Dendritic cell treated with granulocyte-macrophage colony-stimulating factor and Interleukin-4, amounts not matched to agents 40 ng/mL and 50 ng/mL, for 4 days (primary cell): ENCODE measurements at regions of chr3 and their contacts with region 1.

Region 1: DNA sequence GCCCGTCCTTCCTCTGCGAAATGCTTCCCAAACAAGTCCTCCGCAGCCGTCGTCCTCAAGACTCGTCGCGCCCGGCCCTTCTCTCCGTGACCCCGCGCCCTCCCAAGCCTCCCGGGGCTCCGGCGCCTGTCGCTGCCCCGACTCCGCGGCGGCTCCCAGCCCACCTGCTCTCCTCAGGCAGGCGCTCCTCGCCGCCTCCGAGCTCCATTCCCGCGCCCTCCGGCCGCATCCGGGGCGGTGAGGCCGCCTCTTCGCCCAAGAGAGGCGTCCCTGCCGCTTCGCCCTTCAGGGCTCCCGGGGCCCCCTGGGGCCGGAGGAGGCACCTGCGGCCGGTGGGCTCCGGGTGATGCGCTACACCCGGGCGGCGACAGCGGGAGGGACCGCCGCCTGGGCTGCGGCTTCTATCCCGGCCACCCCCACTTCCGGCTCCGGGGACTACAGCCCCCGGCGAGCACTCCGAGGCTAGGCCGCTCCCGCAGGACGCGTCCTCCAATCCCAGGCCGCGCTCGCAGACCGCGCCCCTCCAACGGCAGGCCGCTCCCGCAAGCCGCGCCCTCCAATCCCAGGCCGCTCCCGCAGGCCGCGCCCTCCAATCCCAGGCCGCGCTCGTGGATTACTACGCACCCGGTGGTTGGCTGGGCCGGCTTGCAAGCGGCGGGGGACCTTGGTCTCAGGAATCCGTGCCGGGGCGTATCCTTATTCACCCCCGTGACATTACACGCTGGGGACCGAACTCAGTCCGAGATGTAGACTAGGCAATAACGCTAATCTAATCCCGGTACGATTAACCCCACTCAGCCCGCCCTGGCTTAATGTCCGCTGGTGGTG is at the start of gene RUBCN:
- H3K4me3 Mint-ChIP-seq: peak within 1 kb of the TSS; percentile 82
- H3K27ac Mint-ChIP-seq: peak within 1 kb of the TSS; percentile 75
- H3K4me1 Mint-ChIP-seq: peaks cover 46% of the 10 kb centered on the region
- H3K27me3 Mint-ChIP-seq: peaks cover 11% of the 10 kb centered on the region

Region 2: GRCh38 chr3:197711973-197712707 is 24.6 kb before region 1 on chr3:
- intact Hi-C with region 1: loop called (anchors 1 kb)
- H3K4me3 Mint-ChIP-seq: peak overlapping the region; percentile 53
- H3K27ac Mint-ChIP-seq: peak overlapping the region; percentile 52
- H3K4me1 Mint-ChIP-seq: peaks cover 49% of the 10 kb centered on the region
- H3K27me3 Mint-ChIP-seq: no peaks in the 10 kb centered on the region

Region 3: GRCh38 chr3:197749601-197750395 is 13.1 kb after region 1 on chr3 and contains the start of gene FYTTD1:
- intact Hi-C with region 1: loop called (anchors 1 kb)
- H3K4me3 Mint-ChIP-seq: peak within 1 kb of the TSS; percentile 99
- H3K27ac Mint-ChIP-seq: peak within 1 kb of the TSS; percentile 93
- H3K4me1 Mint-ChIP-seq: peaks cover 50% of the 10 kb centered on the region
- H3K27me3 Mint-ChIP-seq: peaks cover 14% of the 10 kb centered on the region

Region 4: GRCh38 chr3:197791113-197791891 is 54.6 kb after region 1 on chr3 and contains the start of gene LRCH3:
- intact Hi-C with region 1: loop called (anchors 5 kb)
- H3K4me3 Mint-ChIP-seq: peak within 1 kb of the TSS; percentile 98
- H3K27ac Mint-ChIP-seq: peak within 1 kb of the TSS; percentile 94
- H3K4me1 Mint-ChIP-seq: peaks cover 34% of the 10 kb centered on the region
- H3K27me3 Mint-ChIP-seq: no peaks in the 10 kb centered on the region